Panc1 (cell line): ENCODE measurements at regions of chr9 and their contacts with region 1.

Region 1: GRCh38 chr9:86079865-86080469 is 19.4 kb downstream of the GOLM1 start:
- DNase-seq: no peak
- ATAC-seq: peak; percentile 75
- H3K4me3 ChIP-seq: no peak overlapping the region
- H3K27ac ChIP-seq: no peak overlapping the region
- H3K4me1 ChIP-seq: peaks cover 14% of the 10 kb centered on the region
- H3K27me3 ChIP-seq: no peaks in the 10 kb centered on the region
- CTCF ChIP-seq: no peak; the same call in 1 of the 2 replicates

Region 2: GRCh38 chr9:86062845-86063693 is 16.9 kb before region 1 on chr9:
- CTCF ChIA-PET with region 1: interaction called, 12 read pairs
- POLR2A ChIA-PET with region 1: no interaction called
- in situ Hi-C with region 1: no loop called
- intact Hi-C with region 1: no loop called
- DNase-seq: no peak
- ATAC-seq: no peak
- H3K4me3 ChIP-seq: no peak overlapping the region
- H3K27ac ChIP-seq: no peak overlapping the region
- H3K4me1 ChIP-seq: no peaks in the 10 kb centered on the region
- H3K27me3 ChIP-seq: no peaks in the 10 kb centered on the region
- CTCF ChIP-seq: no peak